Activated B cell treated with CpG ODN at 0.5 μM for 24 hours (primary cell): ENCODE measurements at regions of chr14 and their contacts with region 1.

Region 1: DNA sequence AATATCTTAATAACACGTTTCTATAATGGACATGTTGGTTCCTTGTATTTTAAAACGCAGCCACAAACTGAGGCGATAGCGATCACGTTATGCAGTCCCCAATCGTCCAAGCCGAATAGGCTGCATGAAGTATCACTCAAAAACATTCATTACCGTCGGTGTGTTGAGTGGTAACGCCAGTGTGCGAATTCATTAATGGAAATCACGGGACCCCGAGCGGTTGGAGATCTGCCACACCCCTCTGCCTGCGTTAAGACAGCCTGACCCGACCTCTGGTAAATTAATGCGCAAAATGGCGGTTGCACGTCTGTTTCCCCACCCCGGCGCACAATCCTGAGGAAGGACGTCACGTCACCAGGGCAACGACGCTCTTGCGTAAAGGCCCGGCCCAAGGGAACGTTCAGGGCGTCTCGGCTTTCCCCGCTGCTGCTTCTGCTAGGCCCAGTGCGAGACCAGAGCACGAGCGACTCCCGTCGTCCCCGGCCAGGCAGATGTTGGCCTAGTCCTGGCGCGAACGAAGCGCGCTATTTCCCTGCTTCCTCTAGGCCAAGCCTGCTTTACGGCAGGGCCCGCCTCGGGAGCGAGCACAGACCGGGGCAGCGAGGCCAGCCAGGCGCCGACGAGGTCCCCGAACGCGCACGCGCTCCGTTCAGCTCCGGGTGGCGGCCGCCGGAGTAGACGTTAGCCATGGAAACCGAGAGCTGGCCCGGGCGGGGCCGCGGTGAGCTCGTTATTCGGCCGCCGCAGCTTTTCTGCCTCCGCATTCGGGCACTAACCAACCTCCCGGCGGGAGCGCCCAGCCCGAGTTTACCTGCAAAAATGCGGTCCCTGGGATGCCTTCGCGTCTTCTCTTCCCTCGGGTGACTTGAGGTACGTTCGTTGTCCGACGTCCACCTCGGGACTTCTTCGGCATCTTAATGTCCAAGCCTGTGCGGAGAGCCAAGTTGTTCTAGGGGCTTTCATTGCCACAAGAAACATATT is at the start of gene PCNX4:
- DNase-seq: peak; percentile 88
- ATAC-seq: peak; percentile 91
- H3K4me3 Mint-ChIP-seq: peak within 1 kb of the TSS; percentile 92
- H3K27ac Mint-ChIP-seq: peak within 1 kb of the TSS; percentile 96
- H3K4me1 Mint-ChIP-seq: peaks cover 37% of the 10 kb centered on the region
- H3K27me3 Mint-ChIP-seq: no peaks in the 10 kb centered on the region
- CTCF ChIP-seq: no peak
- total RNA-seq, gene PCNX4: 31.7 and 41.4 TPM in 2 replicates

Region 2: DNA sequence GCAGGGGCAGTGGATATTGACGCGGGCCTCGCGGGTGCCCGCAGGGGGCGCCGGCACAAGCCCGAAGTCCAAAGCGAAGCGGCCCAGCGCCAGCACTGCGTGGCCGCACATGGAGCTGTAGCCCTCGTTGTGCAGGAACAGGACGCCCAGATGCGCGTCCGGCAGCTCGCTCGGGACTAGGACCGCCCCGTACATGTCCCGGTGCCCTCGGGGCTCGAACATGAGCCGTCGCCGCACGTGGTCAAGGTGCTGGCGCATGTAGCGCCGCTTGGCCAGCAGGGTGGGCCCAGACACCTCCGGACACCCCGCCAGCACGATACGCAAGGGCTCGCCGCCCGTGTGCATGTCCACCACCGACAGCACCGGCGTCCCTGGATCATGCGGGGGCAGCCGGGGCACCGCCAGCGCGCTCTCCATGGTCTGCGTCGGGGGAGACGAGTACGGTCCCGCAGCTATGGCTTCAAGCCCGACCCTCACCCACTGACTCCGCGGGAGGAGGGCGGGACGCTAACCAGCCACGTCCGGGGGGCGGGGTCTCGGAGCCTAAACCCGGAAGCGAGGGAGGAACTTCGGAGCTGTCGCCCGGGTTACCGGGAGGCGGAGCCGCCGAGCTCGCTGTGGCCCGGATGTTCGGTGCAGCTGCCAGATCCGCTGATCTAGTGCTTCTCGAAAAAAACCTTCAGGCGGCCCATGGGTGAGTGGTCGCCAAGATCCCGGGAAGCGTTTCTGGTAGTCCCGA is 607.8 kb before region 1 on chr14 and contains the starts of genes JKAMP and L3HYPDH:
- CTCF ChIA-PET with region 1: no interaction called
- POLR2A ChIA-PET with region 1: no interaction called
- intact Hi-C with region 1: loop called (anchors 1 kb)
- DNase-seq: peak; percentile 96
- ATAC-seq: peak; percentile 92
- H3K4me3 Mint-ChIP-seq: peak within 1 kb of the TSS; percentile 98
- H3K27ac Mint-ChIP-seq: peak within 1 kb of the TSS; percentile 96
- H3K4me1 Mint-ChIP-seq: peaks cover 52% of the 10 kb centered on the region
- H3K27me3 Mint-ChIP-seq: no peaks in the 10 kb centered on the region
- CTCF ChIP-seq: no peak
- total RNA-seq, gene JKAMP: 18.1 and 28.8 TPM in 2 replicates
- total RNA-seq, gene L3HYPDH: 22.1 and 30.2 TPM in 2 replicates

Region 3: GRCh38 chr14:59964251-59965007 is 127.4 kb before region 1 on chr14:
- CTCF ChIA-PET with region 1: interaction called, 3 read pairs
- POLR2A ChIA-PET with region 1: interaction called, 8 read pairs
- intact Hi-C with region 1: loop called (anchors 1 kb)
- DNase-seq: no peak
- ATAC-seq: peak; percentile 25
- H3K4me3 Mint-ChIP-seq: peak overlapping the region; percentile 86
- H3K27ac Mint-ChIP-seq: peak overlapping the region; percentile 93
- H3K4me1 Mint-ChIP-seq: peaks cover 14% of the 10 kb centered on the region
- H3K27me3 Mint-ChIP-seq: no peaks in the 10 kb centered on the region
- CTCF ChIP-seq: no peak

Region 4: GRCh38 chr14:60079724-60080123 is 12.1 kb before region 1 on chr14:
- CTCF ChIA-PET with region 1: no interaction called
- POLR2A ChIA-PET with region 1: no interaction called
- intact Hi-C with region 1: no loop called
- DNase-seq: no peak
- ATAC-seq: no peak
- H3K4me3 Mint-ChIP-seq: no peak overlapping the region
- H3K27ac Mint-ChIP-seq: no peak overlapping the region
- H3K4me1 Mint-ChIP-seq: no peaks in the 10 kb centered on the region
- H3K27me3 Mint-ChIP-seq: peaks cover 18% of the 10 kb centered on the region
- CTCF ChIP-seq: no peak

Region 5: DNA sequence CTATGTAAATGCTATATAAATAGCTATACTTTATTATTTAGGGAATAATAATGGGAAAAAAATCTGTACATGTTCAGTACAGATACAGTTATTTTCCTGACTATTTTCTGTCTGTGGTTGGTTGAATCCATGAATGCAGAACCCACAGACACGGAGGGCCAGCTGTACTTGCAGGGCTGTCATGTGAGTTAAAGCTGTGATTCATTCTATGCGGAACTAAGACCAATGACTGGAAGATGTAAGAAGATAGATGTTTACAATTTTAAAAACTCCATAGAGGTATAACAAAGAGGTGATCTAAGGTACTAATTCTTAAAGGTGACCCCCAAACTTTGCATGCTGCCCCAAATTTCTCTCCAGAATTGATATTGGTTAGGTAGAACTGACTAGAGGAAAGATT is 14.5 kb after region 1 on chr14:
- CTCF ChIA-PET with region 1: interaction called, 3 read pairs
- POLR2A ChIA-PET with region 1: interaction called, 4 read pairs
- intact Hi-C with region 1: loop called (anchors 1 kb)
- DNase-seq: no peak
- ATAC-seq: peak; percentile 40
- H3K4me3 Mint-ChIP-seq: no peak overlapping the region
- H3K27ac Mint-ChIP-seq: no peak overlapping the region
- H3K4me1 Mint-ChIP-seq: peaks cover 24% of the 10 kb centered on the region
- H3K27me3 Mint-ChIP-seq: no peaks in the 10 kb centered on the region
- CTCF ChIP-seq: no peak

Region 6: GRCh38 chr14:60164712-60165546 is 73.1 kb after region 1 on chr14 and contains the start of gene DHRS7:
- CTCF ChIA-PET with region 1: interaction called, 5 read pairs
- POLR2A ChIA-PET with region 1: interaction called, 23 read pairs
- intact Hi-C with region 1: loop called (anchors 1 kb)
- DNase-seq: peak; percentile 70
- ATAC-seq: peak; percentile 88
- H3K4me3 Mint-ChIP-seq: peak within 1 kb of the TSS; percentile 99
- H3K27ac Mint-ChIP-seq: peak within 1 kb of the TSS; percentile 99
- H3K4me1 Mint-ChIP-seq: peaks cover 39% of the 10 kb centered on the region
- H3K27me3 Mint-ChIP-seq: no peaks in the 10 kb centered on the region
- CTCF ChIP-seq: no peak
- total RNA-seq, gene DHRS7: 41.5 and 47.1 TPM in 2 replicates

Region 7: GRCh38 chr14:60753264-60754119 is 661.7 kb after region 1 on chr14:
- CTCF ChIA-PET with region 1: no interaction called
- POLR2A ChIA-PET with region 1: no interaction called
- intact Hi-C with region 1: loop called (anchors 10 kb)
- DNase-seq: no peak
- ATAC-seq: peak; percentile 95
- H3K4me3 Mint-ChIP-seq: peak overlapping the region; percentile 52
- H3K27ac Mint-ChIP-seq: peak overlapping the region; percentile 81
- H3K4me1 Mint-ChIP-seq: peaks cover 42% of the 10 kb centered on the region
- H3K27me3 Mint-ChIP-seq: no peaks in the 10 kb centered on the region
- CTCF ChIP-seq: no peak

Region 8: GRCh38 chr14:61101803-61102548 is 1010.1 kb after region 1 on chr14:
- CTCF ChIA-PET with region 1: no interaction called
- POLR2A ChIA-PET with region 1: no interaction called
- intact Hi-C with region 1: no loop called
- DNase-seq: no peak
- ATAC-seq: no peak
- H3K4me3 Mint-ChIP-seq: no peak overlapping the region
- H3K27ac Mint-ChIP-seq: no peak overlapping the region
- H3K4me1 Mint-ChIP-seq: peaks cover 21% of the 10 kb centered on the region
- H3K27me3 Mint-ChIP-seq: no peaks in the 10 kb centered on the region
- CTCF ChIP-seq: no peak